OCI-LY7 (cell line): ENCODE measurements at regions of chr1 and their contacts with region 1.

Region 1: GRCh38 chr1:175154629-175155472 is 37.7 kb downstream of the KIAA0040 start:
- DNase-seq: peak; percentile 82
- H3K4me3 ChIP-seq: no peak overlapping the region
- H3K27ac ChIP-seq: peak overlapping the region; percentile 22
- H3K4me1 ChIP-seq: peaks cover 29% of the 10 kb centered on the region
- CTCF ChIP-seq: peak; percentile 99

Region 2: GRCh38 chr1:174736831-174737230 is 418.0 kb before region 1 on chr1:
- CTCF ChIA-PET with region 1: no interaction called
- POLR2A ChIA-PET with region 1: no interaction called
- intact Hi-C with region 1: no loop called
- DNase-seq: no peak
- H3K4me3 ChIP-seq: no peak overlapping the region
- H3K27ac ChIP-seq: no peak overlapping the region
- H3K4me1 ChIP-seq: peaks cover 29% of the 10 kb centered on the region
- CTCF ChIP-seq: no peak

Region 3: GRCh38 chr1:175192630-175193526 is 38.0 kb after region 1 on chr1 and contains the start of gene KIAA0040:
- CTCF ChIA-PET with region 1: interaction called, 9 read pairs
- POLR2A ChIA-PET with region 1: interaction called, 21 read pairs
- intact Hi-C with region 1: loop called (anchors 1 kb)
- DNase-seq: peak; percentile 80
- H3K4me3 ChIP-seq: peak within 1 kb of the TSS; percentile 79
- H3K27ac ChIP-seq: peak within 1 kb of the TSS; percentile 86
- H3K4me1 ChIP-seq: peaks cover 82% of the 10 kb centered on the region
- CTCF ChIP-seq: 0 out of 2 replicates have a peak, but pooled peaks have one; percentile 22
- total RNA-seq, gene KIAA0040: 54.7 and 57.9 TPM in 2 replicates

Region 4: GRCh38 chr1:175225805-175226129 is 70.9 kb after region 1 on chr1:
- CTCF ChIA-PET with region 1: no interaction called
- POLR2A ChIA-PET with region 1: interaction called, 4 read pairs
- intact Hi-C with region 1: loop called (anchors 1 kb)
- DNase-seq: no peak
- H3K4me3 ChIP-seq: peak overlapping the region; percentile 59
- H3K27ac ChIP-seq: peak overlapping the region; percentile 95
- H3K4me1 ChIP-seq: peaks cover 96% of the 10 kb centered on the region
- CTCF ChIP-seq: peak; percentile 79

Region 5: GRCh38 chr1:175338387-175339135 is 183.7 kb after region 1 on chr1:
- CTCF ChIA-PET with region 1: interaction called, 9 read pairs
- POLR2A ChIA-PET with region 1: no interaction called
- intact Hi-C with region 1: loop called (anchors 1 kb)
- DNase-seq: peak; percentile 80
- H3K4me3 ChIP-seq: no peak overlapping the region
- H3K27ac ChIP-seq: no peak overlapping the region
- H3K4me1 ChIP-seq: no peaks in the 10 kb centered on the region
- CTCF ChIP-seq: peak; percentile 83

Region 6: GRCh38 chr1:175434283-175434860 is 279.5 kb after region 1 on chr1:
- CTCF ChIA-PET with region 1: no interaction called
- POLR2A ChIA-PET with region 1: no interaction called
- intact Hi-C with region 1: loop called (anchors 1 kb)
- DNase-seq: peak; percentile 27
- H3K4me3 ChIP-seq: no peak overlapping the region
- H3K27ac ChIP-seq: no peak overlapping the region
- H3K4me1 ChIP-seq: no peaks in the 10 kb centered on the region
- CTCF ChIP-seq: peak; percentile 91